ENCODE measurements at regions of chr4 and their contacts with region 1.

Region 1: DNA sequence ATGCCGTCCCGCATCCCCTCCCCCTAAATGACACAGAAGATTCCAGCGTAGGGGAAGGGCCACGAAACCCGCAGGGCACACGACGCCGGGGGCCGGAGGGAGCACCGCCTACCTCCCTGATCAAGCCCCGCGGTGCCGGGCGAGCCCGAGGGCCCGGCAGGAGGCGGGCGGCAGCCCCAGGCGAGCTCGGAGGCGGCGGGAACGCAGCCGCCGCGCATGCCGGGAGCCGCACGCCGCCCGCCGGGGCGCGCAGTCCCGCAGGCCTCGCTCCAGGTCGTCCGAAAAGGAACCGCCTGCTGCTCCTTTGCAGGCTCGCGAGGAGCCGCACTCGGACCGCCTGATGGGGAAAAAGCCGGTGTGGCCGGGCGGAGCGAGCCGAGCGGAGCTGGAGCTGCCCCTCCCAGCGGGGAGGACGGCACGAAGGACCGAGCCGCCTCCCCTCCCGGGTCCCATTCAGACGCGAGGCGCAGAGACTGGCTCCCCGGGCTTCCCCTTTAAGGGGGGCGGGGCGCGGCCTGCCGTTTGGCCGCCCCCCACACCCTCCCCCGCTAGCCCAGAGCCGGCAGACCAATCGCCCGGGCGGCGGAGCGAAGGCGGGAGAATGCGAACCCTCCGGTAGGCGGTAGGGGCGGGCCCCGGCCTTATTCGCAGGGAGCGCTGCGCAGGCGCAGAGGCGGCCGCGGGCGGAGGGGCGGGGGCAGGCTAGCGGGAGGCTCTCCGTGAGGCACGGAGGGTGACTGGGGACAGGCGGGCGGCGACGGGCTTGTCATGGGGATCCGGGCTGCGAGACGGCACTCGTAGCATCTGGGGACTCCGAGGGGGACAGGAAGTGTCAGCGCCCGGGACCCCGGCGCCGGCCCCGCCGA is 561 bp upstream of the ING2 start:
- DNase-seq: peak; percentile 98
- H3K4me3 ChIP-seq: peak overlapping the region; percentile 75 to 92 (median 76)
- H3K27ac ChIP-seq: peak overlapping the region; percentile 86
- H3K4me1 ChIP-seq: peaks cover 18% of the 10 kb centered on the region
- H3K27me3 ChIP-seq: no peaks in the 10 kb centered on the region
- CTCF ChIP-seq: peak; percentile 1 to 4
- POLR2A ChIP-seq: peak; percentile 58

Region 2: GRCh38 chr4:182917182-182918043 is 586.9 kb before region 1 on chr4 and contains the start of gene DCTD:
- CTCF ChIA-PET with region 1: no interaction called
- POLR2A ChIA-PET with region 1: no interaction called
- dilution Hi-C with region 1: no loop called
- intact Hi-C with region 1: loop called (anchors 1 kb)
- DNase-seq: peak; percentile 60
- H3K4me3 ChIP-seq: peak within 1 kb of the TSS; percentile 63 to 76 (median 70)
- H3K27ac ChIP-seq: peak within 1 kb of the TSS; percentile 82
- H3K4me1 ChIP-seq: peaks cover 16% of the 10 kb centered on the region
- H3K27me3 ChIP-seq: peaks cover 2 to 9% of the 10 kb centered on the region in 2 experiments
- CTCF ChIP-seq: peak; percentile 38 to 63
- POLR2A ChIP-seq: peak; percentile 21
- total RNA-seq, gene DCTD: 106 and 111 TPM in 2 replicates

Region 3: DNA sequence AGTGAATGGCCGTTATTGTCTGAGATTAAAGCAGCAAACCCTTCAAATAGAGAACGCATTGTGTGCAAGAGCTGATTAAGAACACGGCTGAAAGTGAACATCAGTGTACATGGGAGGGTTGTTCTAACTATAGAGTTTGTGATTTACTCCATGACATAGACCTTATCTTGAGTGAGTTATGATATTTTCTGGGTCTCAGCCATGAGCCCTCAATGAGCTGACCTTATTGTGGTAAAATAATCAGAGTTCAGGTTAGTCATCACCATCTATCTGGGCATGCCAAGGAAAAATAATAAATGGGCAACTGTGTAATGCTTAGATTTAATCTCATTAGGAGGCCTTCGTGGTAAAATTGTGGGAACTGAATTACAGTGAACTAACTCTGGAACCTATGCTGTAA is 148.9 kb before region 1 on chr4:
- CTCF ChIA-PET with region 1: no interaction called
- POLR2A ChIA-PET with region 1: no interaction called
- dilution Hi-C with region 1: no loop called
- intact Hi-C with region 1: loop called (anchors 5 kb)
- DNase-seq: peak; percentile 94
- H3K4me3 ChIP-seq: no peak overlapping the region
- H3K27ac ChIP-seq: no peak overlapping the region
- H3K4me1 ChIP-seq: peaks cover 19% of the 10 kb centered on the region
- H3K27me3 ChIP-seq: peaks cover 0 to 2% of the 10 kb centered on the region in 2 experiments
- CTCF ChIP-seq: no peak
- POLR2A ChIP-seq: peak; percentile 6

Region 4: GRCh38 chr4:183471946-183472708 is 32.2 kb before region 1 on chr4:
- CTCF ChIA-PET with region 1: interaction called, 5 read pairs
- POLR2A ChIA-PET with region 1: no interaction called
- dilution Hi-C with region 1: no loop called
- intact Hi-C with region 1: loop called (anchors 1 kb)
- DNase-seq: peak; percentile 76
- H3K4me3 ChIP-seq: no peak overlapping the region
- H3K27ac ChIP-seq: no peak overlapping the region
- H3K4me1 ChIP-seq: no peaks in the 10 kb centered on the region
- H3K27me3 ChIP-seq: no peaks in the 10 kb centered on the region
- CTCF ChIP-seq: peak; percentile 70 to 80
- POLR2A ChIP-seq: no peak

Region 5: DNA sequence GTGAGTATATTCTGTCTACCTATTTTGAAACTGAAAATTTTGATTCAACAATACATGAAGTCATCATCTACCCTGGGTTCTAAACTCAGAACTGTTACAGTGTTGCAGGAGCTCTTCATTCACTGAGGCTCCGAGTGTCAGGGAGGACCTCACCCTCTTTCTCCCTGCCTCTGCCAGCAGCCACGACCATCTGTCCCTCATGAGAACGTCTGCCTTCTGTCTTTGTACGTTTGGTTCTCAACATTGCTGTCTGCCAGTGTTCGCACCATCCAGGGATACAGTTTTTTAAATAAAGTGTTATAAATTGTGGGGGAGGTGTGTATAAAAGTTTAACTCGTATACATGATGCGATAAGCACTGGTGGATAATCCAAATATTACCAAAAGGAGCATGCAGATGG is 210.3 kb after region 1 on chr4:
- CTCF ChIA-PET with region 1: no interaction called
- POLR2A ChIA-PET with region 1: no interaction called
- dilution Hi-C with region 1: no loop called
- intact Hi-C with region 1: no loop called
- DNase-seq: no peak
- H3K4me3 ChIP-seq: no peak overlapping the region
- H3K27ac ChIP-seq: no peak overlapping the region
- H3K4me1 ChIP-seq: no peaks in the 10 kb centered on the region
- H3K27me3 ChIP-seq: no peaks in the 10 kb centered on the region
- CTCF ChIP-seq: no peak
- POLR2A ChIP-seq: no peak

Region 6: GRCh38 chr4:184100297-184100885 is 596.1 kb after region 1 on chr4:
- CTCF ChIA-PET with region 1: no interaction called
- POLR2A ChIA-PET with region 1: no interaction called
- dilution Hi-C with region 1: no loop called
- intact Hi-C with region 1: no loop called
- DNase-seq: no peak
- H3K4me3 ChIP-seq: no peak overlapping the region
- H3K27ac ChIP-seq: no peak overlapping the region
- H3K4me1 ChIP-seq: no peaks in the 10 kb centered on the region
- H3K27me3 ChIP-seq: no peaks in the 10 kb centered on the region
- CTCF ChIP-seq: peak; percentile 59 to 60
- POLR2A ChIP-seq: no peak

Region 7: GRCh38 chr4:184538023-184538599 is 1033.8 kb after region 1 on chr4:
- CTCF ChIA-PET with region 1: no interaction called
- POLR2A ChIA-PET with region 1: no interaction called
- dilution Hi-C with region 1: no loop called
- intact Hi-C with region 1: loop called (anchors 5 kb)
- DNase-seq: peak; percentile 92
- H3K4me3 ChIP-seq: peak overlapping the region; percentile 69 to 86 (median 71)
- H3K27ac ChIP-seq: peak overlapping the region; percentile 97
- H3K4me1 ChIP-seq: peaks cover 28% of the 10 kb centered on the region
- H3K27me3 ChIP-seq: no peaks in the 10 kb centered on the region
- CTCF ChIP-seq: peak; percentile 60 to 66
- POLR2A ChIP-seq: no peak

Measured in endothelial cell of umbilical vein (primary cell).